Calu3 (cell line): ENCODE measurements at regions of chr1 and their contacts with region 1.

Region 1: GRCh38 chr1:59699227-59699847 is 115.4 kb upstream of the HOOK1 start:
- DNase-seq: peak; percentile 31
- H3K4me3 Mint-ChIP-seq: no peak overlapping the region
- H3K27ac Mint-ChIP-seq: no peak overlapping the region
- H3K4me1 Mint-ChIP-seq: peaks cover 22% of the 10 kb centered on the region
- H3K27me3 Mint-ChIP-seq: no peaks in the 10 kb centered on the region
- CTCF ChIP-seq: peak; percentile 90

Region 2: GRCh38 chr1:58739856-58740466 is 959.4 kb before region 1 on chr1:
- CTCF ChIA-PET with region 1: no interaction called
- intact Hi-C with region 1: loop called (anchors 1 kb)
- DNase-seq: peak; percentile 46
- H3K4me3 Mint-ChIP-seq: no peak overlapping the region
- H3K27ac Mint-ChIP-seq: no peak overlapping the region
- H3K4me1 Mint-ChIP-seq: no peaks in the 10 kb centered on the region
- H3K27me3 Mint-ChIP-seq: no peaks in the 10 kb centered on the region
- CTCF ChIP-seq: peak; percentile 74

Region 3: DNA sequence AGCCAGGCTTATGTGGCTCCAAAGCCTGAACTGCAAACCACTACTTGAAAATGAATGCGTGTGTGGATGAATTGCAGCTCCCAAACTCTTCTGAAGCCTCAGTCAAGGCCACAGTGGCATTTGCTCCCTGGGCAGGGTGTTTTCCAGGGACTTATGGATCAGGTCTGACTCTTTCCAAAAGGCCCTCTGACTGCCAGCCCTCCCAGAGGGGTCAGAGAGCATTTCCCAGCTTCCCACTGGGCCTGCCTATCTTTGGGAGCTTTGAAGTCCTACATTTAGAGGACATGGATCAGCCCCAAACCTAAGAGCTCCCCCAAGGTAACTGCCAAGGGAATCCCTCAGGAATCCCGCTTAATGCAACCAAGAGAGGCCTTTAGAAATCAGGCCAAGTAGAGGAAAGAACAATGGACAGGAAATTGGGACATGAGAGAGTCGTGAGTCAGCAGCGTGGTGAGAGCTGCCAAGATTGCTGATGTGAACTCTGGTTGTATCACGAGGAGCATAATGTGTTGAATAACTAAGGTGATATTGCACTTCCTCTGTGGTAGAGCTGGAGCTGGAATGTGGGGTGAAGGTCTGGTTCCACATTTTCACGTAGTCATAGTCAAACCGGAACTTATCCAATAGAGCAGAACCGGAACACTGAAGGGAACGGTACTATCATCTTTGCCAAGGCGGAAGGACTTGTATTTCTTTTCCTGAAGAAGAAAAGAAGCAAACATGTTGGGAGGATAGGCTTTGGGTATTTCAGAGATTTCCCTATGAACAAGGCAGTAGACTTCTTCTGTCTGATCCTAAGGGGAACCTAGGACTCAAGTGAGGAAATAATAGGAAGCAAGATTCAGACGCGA is 816.1 kb before region 1 on chr1:
- CTCF ChIA-PET with region 1: no interaction called
- intact Hi-C with region 1: loop called (anchors 5 kb)
- DNase-seq: peak; percentile 74
- H3K4me3 Mint-ChIP-seq: peak overlapping the region; percentile 37
- H3K27ac Mint-ChIP-seq: peak overlapping the region; percentile 94
- H3K4me1 Mint-ChIP-seq: peaks cover 72% of the 10 kb centered on the region
- H3K27me3 Mint-ChIP-seq: no peaks in the 10 kb centered on the region
- CTCF ChIP-seq: no peak

Region 4: DNA sequence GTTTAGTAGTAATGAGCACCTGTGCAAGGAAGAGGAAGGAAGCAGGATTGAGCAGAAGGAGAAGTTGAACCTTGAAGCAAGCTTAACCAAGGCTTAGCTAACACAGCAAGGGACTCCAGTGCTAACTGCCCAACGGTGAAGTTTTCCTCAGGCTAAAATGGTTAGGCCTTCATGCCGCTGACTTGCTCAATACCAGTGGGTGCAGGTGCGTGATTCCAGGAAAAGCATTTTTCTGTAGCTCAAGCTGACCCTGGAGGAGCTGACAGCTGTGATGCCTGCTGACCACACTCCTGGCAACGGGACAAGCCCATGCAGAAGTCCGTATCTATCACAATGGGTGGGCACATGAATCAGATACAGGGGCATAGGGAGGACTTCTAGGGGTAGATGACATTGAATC is 479.0 kb before region 1 on chr1:
- CTCF ChIA-PET with region 1: no interaction called
- intact Hi-C with region 1: loop called (anchors 5 kb)
- DNase-seq: no peak
- H3K4me3 Mint-ChIP-seq: no peak overlapping the region
- H3K27ac Mint-ChIP-seq: no peak overlapping the region
- H3K4me1 Mint-ChIP-seq: peaks cover 8% of the 10 kb centered on the region
- H3K27me3 Mint-ChIP-seq: no peaks in the 10 kb centered on the region
- CTCF ChIP-seq: no peak

Region 5: DNA sequence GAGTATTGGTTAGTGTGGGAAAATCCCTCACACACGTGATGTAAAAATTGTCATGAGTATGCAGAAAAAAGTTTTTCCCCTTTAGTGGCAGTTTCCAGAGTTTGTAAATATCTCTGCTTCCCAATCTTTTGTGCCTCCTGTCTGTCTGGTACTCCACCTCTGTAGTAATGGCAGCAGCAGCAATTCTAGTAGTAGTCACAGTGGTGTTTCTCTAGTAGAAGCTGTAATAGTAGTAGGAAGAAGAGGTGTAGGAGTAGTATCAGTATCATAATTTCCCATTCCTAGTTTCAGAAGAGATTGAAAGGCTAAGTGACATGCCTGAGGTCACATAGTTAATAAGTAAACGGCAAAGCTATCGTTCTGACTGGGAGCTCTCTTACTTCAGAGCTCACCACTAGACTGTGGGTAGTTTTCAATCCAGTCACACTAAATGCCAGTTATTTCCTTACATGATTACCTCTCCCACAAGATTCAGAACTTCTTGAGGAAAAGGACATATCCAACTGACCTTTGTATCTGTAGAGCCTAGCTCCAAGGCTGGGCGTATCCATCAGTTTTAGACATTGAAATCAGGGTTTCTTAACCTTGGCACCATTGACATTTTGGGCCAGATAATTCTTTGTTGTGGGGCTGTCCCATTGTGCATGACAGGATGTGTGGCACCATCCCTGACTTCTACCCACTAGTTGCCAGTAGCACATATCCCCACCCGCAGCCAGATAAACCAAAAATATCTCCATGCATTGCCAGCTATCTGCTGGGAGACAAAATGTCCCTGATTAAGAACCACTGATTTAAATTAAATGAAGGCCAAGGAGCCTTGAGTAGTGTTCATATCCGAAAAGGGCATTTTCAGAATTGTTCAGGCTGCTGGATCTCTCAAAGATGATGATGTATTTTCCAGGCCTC is 266.6 kb before region 1 on chr1:
- CTCF ChIA-PET with region 1: no interaction called
- intact Hi-C with region 1: loop called (anchors 5 kb)
- DNase-seq: no peak
- H3K4me3 Mint-ChIP-seq: no peak overlapping the region
- H3K27ac Mint-ChIP-seq: peak overlapping the region; percentile 76
- H3K4me1 Mint-ChIP-seq: peaks cover 36% of the 10 kb centered on the region
- H3K27me3 Mint-ChIP-seq: no peaks in the 10 kb centered on the region
- CTCF ChIP-seq: no peak

Region 6: DNA sequence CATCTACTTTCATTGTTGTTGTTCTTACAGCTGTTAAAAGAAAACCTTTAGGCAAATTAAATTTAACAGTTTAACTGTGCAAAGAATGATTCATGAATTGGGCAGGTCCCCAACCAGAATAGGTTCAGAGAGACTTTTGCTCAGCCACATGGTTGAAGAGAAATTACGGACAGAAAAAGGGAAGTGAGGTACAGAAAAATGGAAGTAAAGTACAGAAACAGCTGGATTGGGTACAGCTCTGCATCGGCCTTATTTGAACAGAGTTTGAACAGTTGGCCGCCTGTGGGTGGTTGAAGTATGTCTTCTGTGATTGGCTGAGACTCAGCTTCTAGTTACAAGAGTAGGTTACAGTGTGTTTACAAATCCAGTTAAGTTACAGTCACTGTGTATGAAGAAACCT is 192.4 kb before region 1 on chr1:
- CTCF ChIA-PET with region 1: no interaction called
- intact Hi-C with region 1: loop called (anchors 5 kb)
- DNase-seq: no peak
- H3K4me3 Mint-ChIP-seq: no peak overlapping the region
- H3K27ac Mint-ChIP-seq: no peak overlapping the region
- H3K4me1 Mint-ChIP-seq: peaks cover 15% of the 10 kb centered on the region
- H3K27me3 Mint-ChIP-seq: no peaks in the 10 kb centered on the region
- CTCF ChIP-seq: no peak

Region 7: GRCh38 chr1:59714219-59714618 is 14.9 kb after region 1 on chr1:
- CTCF ChIA-PET with region 1: no interaction called
- intact Hi-C with region 1: no loop called
- DNase-seq: no peak
- H3K4me3 Mint-ChIP-seq: no peak overlapping the region
- H3K27ac Mint-ChIP-seq: no peak overlapping the region
- H3K4me1 Mint-ChIP-seq: no peaks in the 10 kb centered on the region
- H3K27me3 Mint-ChIP-seq: no peaks in the 10 kb centered on the region
- CTCF ChIP-seq: no peak